A673 (cell line): ENCODE measurements at regions of chr13 and their contacts with region 1.

Region 1: GRCh38 chr13:46782691-46783090 is 14.3 kb downstream of the ESD start:
- DNase-seq: no peak
- H3K4me3 ChIP-seq: no peak overlapping the region
- H3K27ac ChIP-seq: no peak overlapping the region
- H3K4me1 ChIP-seq: peaks cover 10% of the 10 kb centered on the region
- H3K27me3 ChIP-seq: no peaks in the 10 kb centered on the region
- CTCF ChIP-seq: no peak

Region 2: GRCh38 chr13:46582190-46582589 is 200.5 kb before region 1 on chr13:
- CTCF ChIA-PET with region 1: interaction called, 10 read pairs
- POLR2A ChIA-PET with region 1: no interaction called
- intact Hi-C with region 1: no loop called
- DNase-seq: no peak
- H3K4me3 ChIP-seq: no peak overlapping the region
- H3K27ac ChIP-seq: no peak overlapping the region
- H3K4me1 ChIP-seq: peaks cover 67% of the 10 kb centered on the region
- H3K27me3 ChIP-seq: no peaks in the 10 kb centered on the region
- CTCF ChIP-seq: no peak

Region 3: GRCh38 chr13:46622630-46623256 is 159.9 kb before region 1 on chr13:
- CTCF ChIA-PET with region 1: no interaction called
- POLR2A ChIA-PET with region 1: no interaction called
- intact Hi-C with region 1: no loop called
- DNase-seq: peak; percentile 96
- H3K4me3 ChIP-seq: peak overlapping the region; percentile 23
- H3K27ac ChIP-seq: peak overlapping the region; percentile 73
- H3K4me1 ChIP-seq: peaks cover 61% of the 10 kb centered on the region
- H3K27me3 ChIP-seq: no peaks in the 10 kb centered on the region
- CTCF ChIP-seq: no peak